ENCODE measurements at regions of chr4 and their contacts with region 1.

Region 1: DNA sequence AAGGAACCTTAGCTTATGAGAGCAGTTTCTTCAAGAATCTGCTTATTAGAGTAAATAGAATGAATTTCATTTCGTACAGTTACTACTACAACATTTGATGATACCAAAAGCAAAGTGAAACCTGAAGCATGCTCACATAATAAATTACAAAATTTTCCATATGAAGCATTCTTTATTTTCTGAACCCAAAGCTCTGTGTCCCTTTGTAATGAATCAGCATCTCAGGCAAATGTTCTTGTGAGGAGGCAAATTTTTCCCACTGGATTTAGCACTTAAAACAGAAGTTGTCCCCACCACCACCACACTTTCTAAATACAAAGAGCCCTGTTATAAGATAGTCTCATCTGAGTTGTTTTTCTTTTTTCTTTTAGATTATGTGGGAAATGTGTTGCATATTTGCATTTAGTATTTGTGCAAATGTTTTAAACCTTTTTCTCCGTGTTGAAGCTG is 70.7 kb upstream of the NFKB1 start:
- DNase-seq: no peak
- H3K4me3 Mint-ChIP-seq: peak overlapping the region; percentile 87
- H3K27ac Mint-ChIP-seq: peak overlapping the region; percentile 82
- H3K4me1 Mint-ChIP-seq: peaks cover 15% of the 10 kb centered on the region
- H3K27me3 Mint-ChIP-seq: peaks cover 5% of the 10 kb centered on the region

Region 2: DNA sequence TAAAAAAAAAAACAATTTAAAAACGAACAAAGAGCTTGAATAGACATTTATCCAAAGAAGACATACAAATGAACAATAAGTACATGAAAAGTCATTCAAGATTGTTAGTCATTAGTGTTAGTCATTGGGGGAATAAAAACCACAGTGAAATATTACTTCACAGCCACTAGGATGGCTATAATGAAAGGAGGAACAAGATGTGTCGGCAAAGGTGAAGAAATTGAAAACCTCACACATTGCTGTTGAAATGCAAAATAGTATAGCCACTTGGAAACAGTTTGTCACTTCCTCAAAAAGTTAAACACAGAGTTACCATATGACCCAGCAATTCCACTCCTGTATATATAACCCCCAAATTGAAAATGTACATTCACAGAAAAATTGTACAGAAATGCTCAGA is 40.0 kb before region 1 on chr4:
- intact Hi-C with region 1: loop called (anchors 1 kb)
- DNase-seq: no peak
- H3K4me3 Mint-ChIP-seq: no peak overlapping the region
- H3K27ac Mint-ChIP-seq: peak overlapping the region; percentile 58
- H3K4me1 Mint-ChIP-seq: peaks cover 20% of the 10 kb centered on the region
- H3K27me3 Mint-ChIP-seq: peaks cover 7% of the 10 kb centered on the region

Region 3: GRCh38 chr4:102620697-102621497 is 190.4 kb after region 1 on chr4:
- intact Hi-C with region 1: loop called (anchors 1 kb)
- DNase-seq: no peak
- H3K4me3 Mint-ChIP-seq: no peak overlapping the region
- H3K27ac Mint-ChIP-seq: no peak overlapping the region
- H3K4me1 Mint-ChIP-seq: peaks cover 63% of the 10 kb centered on the region
- H3K27me3 Mint-ChIP-seq: no peaks in the 10 kb centered on the region

Region 4: DNA sequence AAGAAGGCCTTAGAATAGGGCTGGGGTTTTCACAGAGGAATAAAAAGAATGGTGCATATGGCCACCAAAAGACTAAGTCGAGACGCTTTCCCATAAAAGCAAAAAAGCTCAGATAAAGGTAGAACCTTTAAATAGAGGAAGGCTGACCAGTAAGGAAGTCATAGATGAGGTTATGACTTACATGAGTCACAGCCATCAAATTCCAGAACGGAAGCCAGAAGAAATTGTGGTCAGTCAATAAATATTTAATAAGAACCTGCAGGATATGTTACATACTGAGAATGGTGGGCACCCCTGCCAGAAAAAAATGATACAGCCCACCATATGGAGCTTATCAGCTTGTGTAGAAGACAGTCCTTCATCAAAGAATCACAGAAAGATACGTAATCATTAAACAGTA is 210.2 kb after region 1 on chr4:
- intact Hi-C with region 1: no loop called
- DNase-seq: no peak
- H3K4me3 Mint-ChIP-seq: no peak overlapping the region
- H3K27ac Mint-ChIP-seq: no peak overlapping the region
- H3K4me1 Mint-ChIP-seq: peaks cover 8% of the 10 kb centered on the region
- H3K27me3 Mint-ChIP-seq: no peaks in the 10 kb centered on the region

Region 5: GRCh38 chr4:102868781-102869568 is 438.5 kb after region 1 on chr4 and contains the start of gene CISD2:
- intact Hi-C with region 1: loop called (anchors 2 kb)
- DNase-seq: peak; percentile 91
- H3K4me3 Mint-ChIP-seq: peak within 1 kb of the TSS; percentile 93
- H3K27ac Mint-ChIP-seq: peak within 1 kb of the TSS; percentile 99
- H3K4me1 Mint-ChIP-seq: peaks cover 69% of the 10 kb centered on the region
- H3K27me3 Mint-ChIP-seq: no peaks in the 10 kb centered on the region
- total RNA-seq, gene CISD2: 41.2 and 50.7 TPM in 2 replicates

Region 6: GRCh38 chr4:103075901-103076739 is 645.6 kb after region 1 on chr4:
- intact Hi-C with region 1: loop called (anchors 5 kb)
- DNase-seq: peak; percentile 60
- H3K4me3 Mint-ChIP-seq: peak overlapping the region; percentile 99
- H3K27ac Mint-ChIP-seq: peak overlapping the region; percentile 100
- H3K4me1 Mint-ChIP-seq: peaks cover 51% of the 10 kb centered on the region
- H3K27me3 Mint-ChIP-seq: no peaks in the 10 kb centered on the region

Measured in activated T-helper 1 cell treated with anti-CD3 and anti-CD28 coated beads, Interleukin-12 subunit alpha, Interleukin-12 subunit beta, Interleukin-2, Interleukin-4 antibody, amounts not matched to agents 30 ng/mL and 10 ng/mL and 1 ng/mL, durations not matched to agents 14 hours and 24 hours and 36 hours (primary cell).